ENCODE measurements at regions of chr4 and their contacts with region 1.

Region 1: GRCh38 chr4:54233277-54233696 is 4.2 kb downstream of the PDGFRA start:
- DNase-seq: peak in 1 of 2 experiments; percentile 67
- H3K4me3 ChIP-seq: no peak overlapping the region; the same call in 1 of the 2 replicates
- H3K27ac ChIP-seq: no peak overlapping the region
- H3K4me1 ChIP-seq: no peaks in the 10 kb centered on the region
- H3K27me3 ChIP-seq: no peaks in the 10 kb centered on the region
- CTCF ChIP-seq: peak; percentile 67

Region 2: DNA sequence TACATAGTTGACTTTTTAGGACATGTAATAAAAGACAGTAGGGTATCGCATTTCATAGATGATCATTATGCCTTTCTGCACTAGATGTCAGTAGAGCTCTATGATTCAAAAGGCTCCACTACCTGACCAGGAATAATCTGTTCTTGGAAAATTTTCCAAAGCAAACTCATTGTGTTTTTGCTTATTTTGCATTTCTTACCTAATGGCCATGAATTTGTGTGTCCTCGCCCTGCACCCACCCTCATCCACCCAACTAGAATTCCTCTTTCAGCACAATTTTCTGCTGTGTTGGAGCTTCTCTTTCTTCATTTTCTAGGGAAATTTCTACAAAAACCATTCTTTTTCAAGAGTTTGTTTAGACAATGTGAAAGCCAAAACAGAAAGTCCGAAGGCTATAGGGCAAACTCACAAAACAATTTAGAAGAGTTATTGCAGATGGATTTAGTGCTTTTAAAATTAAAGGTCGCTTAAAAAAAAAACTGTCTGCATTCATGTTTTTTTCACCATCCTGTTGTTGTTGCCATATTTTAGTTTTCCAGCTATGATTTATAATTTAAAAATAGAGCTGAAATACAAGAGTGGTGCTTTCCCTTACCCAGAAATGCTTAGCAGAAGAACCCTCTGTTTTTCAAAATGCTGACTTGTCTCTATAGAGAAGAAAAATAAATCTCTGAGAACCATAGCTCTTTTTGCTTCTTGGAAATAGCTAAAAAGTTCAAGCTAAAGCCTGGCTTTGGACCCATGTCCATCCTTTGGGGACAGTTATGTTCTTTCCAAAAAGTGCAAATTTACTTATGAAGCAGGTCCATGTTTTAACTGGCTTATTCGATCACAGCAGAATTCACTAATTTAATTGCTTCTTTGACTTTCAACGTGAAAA is 1998.5 kb before region 1 on chr4:
- CTCF ChIA-PET with region 1: no interaction called
- POLR2A ChIA-PET with region 1: no interaction called
- intact Hi-C with region 1: loop called (anchors 2 kb)
- DNase-seq: peak in 1 of 2 experiments; percentile 49
- H3K4me3 ChIP-seq: no peak overlapping the region
- H3K27ac ChIP-seq: no peak overlapping the region
- H3K4me1 ChIP-seq: no peaks in the 10 kb centered on the region
- H3K27me3 ChIP-seq: no peaks in the 10 kb centered on the region
- CTCF ChIP-seq: peak; percentile 69

Region 3: DNA sequence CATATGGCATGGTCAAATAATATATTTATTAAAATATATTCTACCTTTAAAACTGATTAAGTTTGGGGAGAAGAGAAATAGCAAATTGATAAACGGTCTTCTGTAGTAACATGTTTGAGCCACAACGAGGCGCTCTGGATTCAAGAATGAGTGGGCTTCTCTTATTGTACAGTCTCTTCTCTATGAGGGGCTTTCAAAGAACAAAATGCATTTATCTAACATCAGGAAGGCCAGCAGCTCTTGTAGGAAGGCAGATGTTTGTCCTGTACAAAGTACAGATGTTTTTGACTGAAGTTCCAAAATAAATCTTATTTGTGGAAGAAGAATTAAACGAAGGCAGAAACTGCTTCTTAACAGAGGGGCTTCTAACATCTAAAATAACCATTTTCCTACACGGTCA is 1217.6 kb before region 1 on chr4:
- CTCF ChIA-PET with region 1: no interaction called
- POLR2A ChIA-PET with region 1: no interaction called
- intact Hi-C with region 1: loop called (anchors 10 kb)
- DNase-seq: no peak
- H3K4me3 ChIP-seq: no peak overlapping the region
- H3K27ac ChIP-seq: no peak overlapping the region
- H3K4me1 ChIP-seq: no peaks in the 10 kb centered on the region; the same call in 1 of the 2 replicates
- H3K27me3 ChIP-seq: no peaks in the 10 kb centered on the region
- CTCF ChIP-seq: peak; percentile 60

Region 4: DNA sequence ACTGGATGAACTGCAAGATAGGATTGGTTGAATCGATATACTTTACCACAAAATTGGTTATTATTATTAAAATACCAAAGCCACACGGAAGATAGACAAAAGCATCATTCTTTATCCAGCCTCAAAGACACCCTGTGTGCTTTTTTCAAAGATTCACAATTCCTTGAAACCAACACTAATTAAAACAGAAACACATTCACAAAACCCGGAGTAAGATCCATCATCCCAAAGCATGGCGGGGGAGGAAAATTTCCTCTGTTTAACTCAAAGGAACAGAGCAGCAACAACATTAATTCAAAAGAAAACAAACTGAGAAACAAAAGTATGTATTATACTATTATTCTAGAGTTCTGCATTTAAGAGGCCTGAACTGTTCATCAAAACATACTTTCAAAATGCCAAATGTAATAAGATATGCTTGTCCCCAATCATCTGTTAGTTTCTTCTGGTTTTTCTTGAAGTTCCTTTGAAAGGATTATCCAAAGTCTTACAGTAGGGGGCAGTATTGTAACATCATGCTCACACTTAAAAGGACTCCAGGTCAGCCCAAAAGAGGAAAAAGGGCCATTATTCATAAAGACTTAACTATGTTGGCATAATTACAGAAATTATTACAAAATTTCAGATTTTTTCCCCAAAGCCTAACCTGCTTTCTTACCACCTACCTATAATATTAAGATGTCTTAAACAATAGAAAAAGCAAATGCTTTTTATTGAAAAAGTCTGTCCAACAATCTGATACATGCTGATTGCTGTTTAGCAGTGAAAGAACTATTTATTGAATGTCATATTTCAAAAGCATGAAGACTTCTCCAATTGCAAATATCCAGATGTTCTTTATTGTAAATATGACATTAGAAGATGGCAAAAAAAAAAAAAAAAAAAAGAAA is 1036.2 kb before region 1 on chr4:
- CTCF ChIA-PET with region 1: interaction called, 6 read pairs
- POLR2A ChIA-PET with region 1: no interaction called
- intact Hi-C with region 1: loop called (anchors 1 kb)
- DNase-seq: no peak
- H3K4me3 ChIP-seq: no peak overlapping the region
- H3K27ac ChIP-seq: no peak overlapping the region
- H3K4me1 ChIP-seq: no peaks in the 10 kb centered on the region
- H3K27me3 ChIP-seq: no peaks in the 10 kb centered on the region
- CTCF ChIP-seq: peak; percentile 88

Region 5: GRCh38 chr4:53702334-53703266 is 530.7 kb before region 1 on chr4:
- CTCF ChIA-PET with region 1: no interaction called
- POLR2A ChIA-PET with region 1: no interaction called
- intact Hi-C with region 1: loop called (anchors 5 kb)
- DNase-seq: peak; percentile 46 to 59
- H3K4me3 ChIP-seq: peak overlapping the region; percentile 23; the same call in 1 of the 2 replicates
- H3K27ac ChIP-seq: no peak overlapping the region
- H3K4me1 ChIP-seq: 0 out of 2 replicates have a peak, but pooled peaks cover 7% of the 10 kb centered on the region
- H3K27me3 ChIP-seq: no peaks in the 10 kb centered on the region
- CTCF ChIP-seq: no peak